Common myeloid progenitor, CD34-positive (primary cell): ENCODE measurements at regions of chr2 and their contacts with region 1.

Region 1: GRCh38 chr2:200483729-200484198 is 26.1 kb downstream of the KCTD18 start:
- DNase-seq: peak; percentile 32 to 68 (median 61)
- H3K4me3 ChIP-seq: no peak overlapping the region
- H3K27ac ChIP-seq: no peak overlapping the region
- H3K4me1 ChIP-seq: peaks cover 0 to 34% (median 5%) of the 10 kb centered on the region in 4 experiments
- H3K27me3 ChIP-seq: no peaks in the 10 kb centered on the region

Region 2: GRCh38 chr2:199973703-199974102 is 510.1 kb before region 1 on chr2:
- CTCF ChIA-PET with region 1: interaction called, 64 read pairs
- POLR2A ChIA-PET with region 1: no interaction called
- DNase-seq: peak; percentile 32 to 62 (median 58)
- H3K4me3 ChIP-seq: no peak overlapping the region
- H3K27ac ChIP-seq: no peak overlapping the region
- H3K4me1 ChIP-seq: no peaks in the 10 kb centered on the region
- H3K27me3 ChIP-seq: no peaks in the 10 kb centered on the region

Region 3: DNA sequence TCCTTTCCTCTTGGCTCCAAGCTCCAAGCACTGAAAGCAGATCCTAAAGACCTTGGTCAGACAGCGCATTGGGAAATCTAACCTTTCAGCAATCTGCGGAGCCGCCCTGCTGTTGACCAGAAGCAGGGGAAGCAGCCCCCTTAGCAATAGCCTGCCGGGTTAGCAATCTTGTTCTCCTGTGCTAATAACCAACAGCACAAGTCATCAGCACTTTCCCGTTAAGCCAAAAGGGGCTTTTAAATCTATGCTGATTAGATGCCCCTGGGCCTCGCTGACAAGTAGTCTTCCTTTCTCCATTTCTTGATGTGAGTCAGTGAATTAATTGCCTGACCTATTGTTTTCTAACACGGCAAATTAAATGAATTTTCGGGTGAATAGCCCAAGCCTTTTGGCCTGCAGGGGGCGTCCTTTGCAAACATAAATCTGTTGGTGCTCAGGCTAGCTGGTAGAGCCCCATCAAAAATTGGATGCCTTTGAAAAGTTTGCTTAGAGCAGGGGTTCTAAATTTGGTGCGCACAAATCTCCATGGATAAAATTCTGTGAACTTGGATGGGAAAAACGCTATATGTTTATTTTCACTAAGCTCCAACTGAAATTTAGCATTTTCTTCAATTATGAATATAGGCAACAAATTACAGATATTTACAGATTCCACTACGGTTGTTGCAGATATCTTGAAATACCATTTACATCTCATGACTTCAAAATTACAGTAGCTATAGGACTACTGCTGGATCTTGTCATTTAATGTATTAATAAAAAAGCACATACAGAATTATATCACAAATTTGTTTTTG is 503.7 kb before region 1 on chr2:
- CTCF ChIA-PET with region 1: interaction called, 64 read pairs
- POLR2A ChIA-PET with region 1: no interaction called
- DNase-seq: peak; percentile 79 to 86 (median 79)
- H3K4me3 ChIP-seq: peak overlapping the region in 4 of 7 experiments; percentile 9 to 44 (median 36)
- H3K27ac ChIP-seq: no peak overlapping the region
- H3K4me1 ChIP-seq: peaks cover 0 to 3% (median 0%) of the 10 kb centered on the region in 4 experiments
- H3K27me3 ChIP-seq: no peaks in the 10 kb centered on the region

Region 4: DNA sequence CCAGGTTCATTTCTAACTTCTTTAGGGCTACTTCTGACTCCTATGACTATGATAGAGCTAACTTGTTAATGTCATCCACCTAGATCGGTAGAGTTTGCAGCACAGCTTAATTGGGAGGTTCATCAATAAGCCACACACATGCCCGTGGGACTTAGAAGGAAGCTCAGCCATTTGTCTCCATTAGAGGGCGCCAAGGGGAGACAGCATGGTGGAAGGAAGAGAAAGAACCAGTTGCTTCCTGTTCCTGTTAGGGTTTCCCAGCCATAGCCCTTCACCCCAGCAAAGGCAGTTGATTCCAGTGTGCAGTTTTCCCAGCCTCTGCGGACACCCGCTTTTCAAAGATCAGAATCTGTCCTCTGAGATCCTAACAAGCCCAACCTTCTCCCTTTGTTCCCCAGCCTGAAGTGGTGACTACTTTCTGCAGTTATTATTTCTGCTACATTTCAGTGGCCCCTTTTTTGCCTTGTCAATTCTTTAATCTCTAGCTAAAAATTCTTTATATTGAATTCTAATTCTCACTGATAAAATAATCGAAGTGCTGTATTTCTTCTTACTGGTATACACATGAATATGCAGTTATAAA is 498.0 kb before region 1 on chr2:
- CTCF ChIA-PET with region 1: interaction called, 49 read pairs
- POLR2A ChIA-PET with region 1: no interaction called
- DNase-seq: peak; percentile 74 to 84 (median 83)
- H3K4me3 ChIP-seq: no peak overlapping the region
- H3K27ac ChIP-seq: no peak overlapping the region
- H3K4me1 ChIP-seq: peaks cover 6 to 12% (median 10%) of the 10 kb centered on the region in 4 experiments
- H3K27me3 ChIP-seq: no peaks in the 10 kb centered on the region

Region 5: DNA sequence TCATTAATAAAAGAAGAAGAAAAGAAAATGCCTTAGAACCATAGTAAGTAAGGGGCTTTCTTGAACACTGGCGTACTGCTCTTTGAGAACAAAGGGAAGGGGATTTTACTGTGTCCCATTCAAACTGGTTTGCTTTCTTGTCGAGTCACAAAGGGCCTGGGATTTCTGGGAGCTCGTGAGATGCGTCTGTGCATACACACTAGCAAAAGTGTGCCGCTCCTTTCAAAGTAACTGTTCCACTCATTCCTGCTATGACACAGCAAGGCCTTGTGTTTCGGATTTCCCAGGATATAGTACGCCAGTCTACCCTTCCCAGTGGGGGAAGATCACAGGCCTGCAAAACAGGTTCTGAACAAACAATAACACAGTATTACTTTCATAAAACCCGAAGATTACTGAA is 66.9 kb before region 1 on chr2:
- CTCF ChIA-PET with region 1: no interaction called
- POLR2A ChIA-PET with region 1: no interaction called
- DNase-seq: no peak
- H3K4me3 ChIP-seq: no peak overlapping the region
- H3K27ac ChIP-seq: no peak overlapping the region
- H3K4me1 ChIP-seq: no peaks in the 10 kb centered on the region
- H3K27me3 ChIP-seq: no peaks in the 10 kb centered on the region

Region 6: DNA sequence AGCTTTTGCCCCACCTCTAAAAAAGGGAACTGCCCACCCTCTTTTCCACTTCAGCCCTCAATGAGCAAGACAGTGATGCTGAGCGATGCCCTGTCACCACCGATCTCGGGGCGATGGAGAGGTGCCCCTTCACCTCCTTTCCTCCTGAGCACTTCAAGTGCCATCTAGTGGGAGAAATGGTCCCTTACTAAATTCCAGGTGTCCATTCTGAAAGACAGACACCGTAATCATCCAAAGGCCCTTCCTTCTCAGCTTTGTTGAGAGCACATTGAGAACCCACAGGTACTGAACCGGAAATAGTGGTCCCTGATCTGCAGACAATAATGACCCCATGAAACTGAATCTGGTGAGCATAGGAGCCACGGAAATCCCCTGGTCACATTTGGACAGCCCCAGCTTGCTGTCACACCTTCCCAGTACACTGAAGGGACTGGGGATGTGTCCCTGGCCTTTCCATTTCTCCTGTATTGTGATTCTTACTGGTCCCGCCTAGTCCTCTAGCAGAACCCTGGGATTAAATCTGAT is 12.4 kb before region 1 on chr2:
- CTCF ChIA-PET with region 1: interaction called, 39 read pairs
- POLR2A ChIA-PET with region 1: no interaction called
- DNase-seq: peak; percentile 60 to 81 (median 76)
- H3K4me3 ChIP-seq: no peak overlapping the region
- H3K27ac ChIP-seq: no peak overlapping the region
- H3K4me1 ChIP-seq: no peaks in the 10 kb centered on the region
- H3K27me3 ChIP-seq: no peaks in the 10 kb centered on the region

Region 7: GRCh38 chr2:200507179-200507578 is 23.4 kb after region 1 on chr2:
- CTCF ChIA-PET with region 1: interaction called, 11 read pairs
- POLR2A ChIA-PET with region 1: no interaction called
- DNase-seq: no peak
- H3K4me3 ChIP-seq: no peak overlapping the region
- H3K27ac ChIP-seq: no peak overlapping the region
- H3K4me1 ChIP-seq: peaks cover 5 to 16% (median 11%) of the 10 kb centered on the region in 4 experiments
- H3K27me3 ChIP-seq: no peaks in the 10 kb centered on the region

Region 8: DNA sequence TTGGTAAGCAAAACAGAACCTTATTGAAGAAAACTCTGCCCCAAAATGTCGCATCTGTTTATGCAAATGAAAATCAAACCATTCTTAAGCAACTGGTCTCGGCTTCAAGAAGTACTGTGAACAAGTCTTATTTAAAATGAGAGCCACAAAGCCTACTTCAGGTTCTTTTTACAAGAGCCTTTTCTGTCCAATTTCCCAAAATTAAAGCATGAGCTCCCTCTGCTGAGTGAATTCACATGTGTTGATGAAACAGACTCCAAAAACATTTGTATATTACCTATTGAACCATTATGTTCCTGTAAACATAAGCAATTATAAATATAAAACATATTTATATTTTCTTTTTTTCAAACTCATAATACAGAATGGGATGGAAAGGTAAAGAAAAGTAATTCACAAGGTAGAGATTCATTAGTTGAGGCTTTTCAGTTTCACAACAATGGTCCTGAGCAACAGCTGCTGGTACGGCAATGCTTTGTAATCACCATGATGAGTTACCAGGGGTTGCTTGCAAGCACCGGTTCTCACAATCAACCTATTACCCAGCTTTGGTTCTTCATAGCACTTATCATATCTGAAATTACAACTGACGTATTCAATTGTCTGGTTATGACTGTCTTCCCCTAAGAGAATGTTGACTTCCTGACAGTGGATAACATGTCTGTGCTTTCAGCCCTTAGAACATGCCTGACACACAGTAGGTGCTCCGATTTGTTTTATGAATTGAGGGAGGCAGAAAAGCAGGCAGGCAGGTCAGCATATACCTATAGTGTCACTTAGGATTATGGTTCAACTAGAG is 219.6 kb after region 1 on chr2:
- CTCF ChIA-PET with region 1: interaction called, 28 read pairs
- POLR2A ChIA-PET with region 1: no interaction called
- DNase-seq: peak; percentile 81 to 90 (median 86)
- H3K4me3 ChIP-seq: no peak overlapping the region
- H3K27ac ChIP-seq: no peak overlapping the region
- H3K4me1 ChIP-seq: peaks cover 3 to 34% (median 11%) of the 10 kb centered on the region in 4 experiments
- H3K27me3 ChIP-seq: no peaks in the 10 kb centered on the region